HAP-1 (cell line): ENCODE measurements at regions of chr12 and their contacts with region 1.

Region 1: DNA sequence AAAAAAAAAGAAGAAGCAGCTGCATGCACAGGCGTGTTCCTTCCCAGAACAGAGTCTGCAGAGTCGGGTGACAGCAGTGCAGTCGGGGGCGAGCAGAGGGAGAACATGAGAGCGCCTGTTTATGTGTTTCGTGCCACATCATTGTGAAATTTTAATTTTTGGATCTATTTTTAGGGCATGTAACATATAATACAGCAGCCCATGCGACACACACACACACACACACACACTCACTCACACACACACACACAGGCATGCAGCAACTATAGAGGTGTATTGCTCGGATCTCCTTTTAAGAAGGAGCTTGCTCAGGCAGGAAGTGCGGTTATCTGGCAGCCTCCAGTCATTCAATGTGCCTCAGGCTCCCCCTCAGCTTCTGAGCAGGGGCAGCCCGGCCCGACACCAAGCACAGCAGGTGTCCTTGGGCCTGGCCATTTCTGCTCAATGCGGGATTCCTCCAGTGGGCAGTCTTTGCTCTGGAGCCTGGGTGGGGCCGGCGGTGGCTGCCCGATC is 71.8 kb downstream of the ZNF664 start:
- DNase-seq: no peak
- H3K4me3 ChIP-seq: no peak overlapping the region
- H3K4me1 ChIP-seq: no peaks in the 10 kb centered on the region
- H3K27me3 ChIP-seq: no peaks in the 10 kb centered on the region

Region 2: DNA sequence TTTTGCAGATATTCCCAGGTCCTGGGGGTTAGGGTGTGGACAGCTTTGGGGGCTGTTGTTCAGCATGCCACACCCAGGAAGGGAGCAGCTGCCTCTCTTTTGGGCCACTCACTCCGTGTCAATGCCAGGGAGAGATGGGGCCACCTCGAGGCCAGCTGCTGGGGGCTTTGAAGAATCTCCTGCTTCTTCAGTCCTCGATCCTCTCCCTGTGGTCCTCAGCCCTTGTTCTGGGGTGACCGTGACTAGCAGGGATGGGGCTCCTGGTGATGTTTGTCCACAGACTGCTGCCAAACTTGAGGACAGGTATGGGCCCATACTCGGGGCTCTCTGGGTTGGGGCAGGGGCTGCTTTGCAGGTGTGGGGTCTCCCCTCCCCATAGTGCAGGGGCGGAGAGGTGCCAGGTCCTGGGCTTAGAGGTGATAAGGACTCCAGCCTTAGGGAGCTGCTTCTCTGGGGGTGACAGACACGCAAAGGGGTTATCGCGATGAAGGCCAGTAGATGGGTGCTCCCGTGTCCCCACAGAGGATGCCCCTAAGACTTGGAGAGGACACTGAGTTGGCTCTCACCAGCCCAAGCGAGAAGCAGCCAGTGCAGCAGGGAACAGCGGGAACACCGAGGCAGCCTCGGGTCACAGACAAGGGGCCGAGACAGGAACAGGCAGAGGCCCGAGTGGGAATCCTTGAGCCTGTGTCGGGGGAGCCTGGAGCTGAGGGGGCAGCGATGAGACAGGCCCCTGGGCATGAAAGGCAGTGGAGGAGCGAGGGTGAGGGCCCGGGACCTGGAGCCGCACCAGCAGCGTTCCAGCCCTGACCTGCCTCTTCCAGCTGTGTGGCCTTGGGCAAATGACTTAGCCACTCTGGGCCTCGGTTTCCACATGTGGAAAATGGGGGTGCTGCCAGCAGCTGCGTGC is 261.2 kb after region 1 on chr12:
- in situ Hi-C with region 1: loop called (anchors 5 kb)
- DNase-seq: no peak
- H3K4me3 ChIP-seq: no peak overlapping the region
- H3K4me1 ChIP-seq: no peaks in the 10 kb centered on the region
- H3K27me3 ChIP-seq: no peaks in the 10 kb centered on the region

Region 3: DNA sequence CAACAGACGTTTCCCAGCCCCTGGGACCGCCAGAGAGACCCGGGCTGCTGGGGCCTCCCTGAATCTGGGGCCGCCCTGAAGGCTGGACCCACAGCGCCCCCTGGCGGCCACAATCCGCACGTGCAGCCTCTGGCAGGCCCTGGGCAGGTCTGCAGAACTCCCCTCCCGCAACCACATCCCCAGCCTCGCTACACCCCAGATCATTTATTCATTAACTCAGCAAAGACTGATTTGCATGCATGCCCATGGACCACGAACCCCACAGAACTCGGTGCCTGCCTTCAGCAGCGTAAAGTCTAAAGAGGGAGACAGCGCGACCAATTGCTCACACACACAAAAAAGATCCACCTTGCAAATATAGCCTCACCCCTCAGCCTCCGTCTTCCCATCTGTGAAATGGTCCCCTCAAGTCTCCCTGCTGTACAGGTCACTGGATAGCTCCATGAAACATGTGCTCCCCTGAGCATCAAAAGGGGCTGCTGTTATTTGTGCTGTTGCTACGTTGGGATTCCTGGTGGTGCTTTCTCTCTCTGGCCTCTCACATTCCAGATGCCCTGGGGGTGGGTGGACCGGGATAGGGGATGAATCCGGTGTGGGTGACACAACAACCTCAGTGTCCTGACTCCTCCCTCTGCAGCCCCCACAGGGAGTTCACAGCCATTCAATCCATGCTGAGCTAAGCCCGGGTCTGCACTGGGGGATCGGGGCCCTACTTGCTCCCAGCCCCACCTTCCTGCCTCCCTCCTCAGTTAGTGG is 722.4 kb after region 1 on chr12:
- in situ Hi-C with region 1: loop called (anchors 5 kb)
- DNase-seq: peak; percentile 36 to 85
- H3K4me3 ChIP-seq: no peak overlapping the region
- H3K4me1 ChIP-seq: peaks cover 3% of the 10 kb centered on the region; the same call in 1 of the 2 replicates
- H3K27me3 ChIP-seq: no peaks in the 10 kb centered on the region